Activated CD8-positive, alpha-beta memory T cell treated with anti-CD3 and anti-CD28 coated beads, Interleukin-2, amount 10 ng/mL, durations not matched to agents 7 days and 5 days (primary cell): ENCODE measurements at regions of chr5 and their contacts with region 1.

Region 1: GRCh38 chr5:172984243-172984953 is 827 bp downstream of the ATP6V0E1 start:
- DNase-seq: peak; percentile 88
- ATAC-seq: peak; percentile 73
- H3K4me3 Mint-ChIP-seq: peak overlapping the region; percentile 94
- H3K27ac Mint-ChIP-seq: peak overlapping the region; percentile 99
- H3K4me1 Mint-ChIP-seq: peaks cover 24% of the 10 kb centered on the region
- H3K27me3 Mint-ChIP-seq: no peaks in the 10 kb centered on the region

Region 2: GRCh38 chr5:172902497-172903200 is 81.7 kb before region 1 on chr5:
- CTCF ChIA-PET with region 1: no interaction called
- DNase-seq: no peak
- ATAC-seq: no peak
- H3K4me3 Mint-ChIP-seq: no peak overlapping the region
- H3K27ac Mint-ChIP-seq: no peak overlapping the region
- H3K4me1 Mint-ChIP-seq: peaks cover 12% of the 10 kb centered on the region
- H3K27me3 Mint-ChIP-seq: no peaks in the 10 kb centered on the region

Region 3: GRCh38 chr5:172958331-172959046 is 25.9 kb before region 1 on chr5:
- CTCF ChIA-PET with region 1: interaction called, 28 read pairs
- DNase-seq: peak; percentile 71
- ATAC-seq: peak; percentile 77
- H3K4me3 Mint-ChIP-seq: peak overlapping the region; percentile 92
- H3K27ac Mint-ChIP-seq: peak overlapping the region; percentile 95
- H3K4me1 Mint-ChIP-seq: peaks cover 22% of the 10 kb centered on the region
- H3K27me3 Mint-ChIP-seq: peaks cover 3% of the 10 kb centered on the region

Region 4: GRCh38 chr5:172994405-172994804 is 10.0 kb after region 1 on chr5:
- CTCF ChIA-PET with region 1: interaction called, 11 read pairs
- DNase-seq: no peak
- ATAC-seq: no peak
- H3K4me3 Mint-ChIP-seq: no peak overlapping the region
- H3K27ac Mint-ChIP-seq: no peak overlapping the region
- H3K4me1 Mint-ChIP-seq: peaks cover 24% of the 10 kb centered on the region
- H3K27me3 Mint-ChIP-seq: no peaks in the 10 kb centered on the region

Region 5: GRCh38 chr5:173035904-173036707 is 51.7 kb after region 1 on chr5:
- CTCF ChIA-PET with region 1: interaction called, 14 read pairs
- DNase-seq: no peak
- ATAC-seq: no peak
- H3K4me3 Mint-ChIP-seq: peak overlapping the region; percentile 63
- H3K27ac Mint-ChIP-seq: peak overlapping the region; percentile 88
- H3K4me1 Mint-ChIP-seq: peaks cover 44% of the 10 kb centered on the region
- H3K27me3 Mint-ChIP-seq: no peaks in the 10 kb centered on the region

Region 6: GRCh38 chr5:173057062-173057924 is 72.9 kb after region 1 on chr5:
- CTCF ChIA-PET with region 1: interaction called, 13 read pairs
- DNase-seq: peak; percentile 99
- ATAC-seq: peak; percentile 88
- H3K4me3 Mint-ChIP-seq: peak overlapping the region; percentile 86
- H3K27ac Mint-ChIP-seq: peak overlapping the region; percentile 92
- H3K4me1 Mint-ChIP-seq: peaks cover 41% of the 10 kb centered on the region
- H3K27me3 Mint-ChIP-seq: no peaks in the 10 kb centered on the region

Region 7: DNA sequence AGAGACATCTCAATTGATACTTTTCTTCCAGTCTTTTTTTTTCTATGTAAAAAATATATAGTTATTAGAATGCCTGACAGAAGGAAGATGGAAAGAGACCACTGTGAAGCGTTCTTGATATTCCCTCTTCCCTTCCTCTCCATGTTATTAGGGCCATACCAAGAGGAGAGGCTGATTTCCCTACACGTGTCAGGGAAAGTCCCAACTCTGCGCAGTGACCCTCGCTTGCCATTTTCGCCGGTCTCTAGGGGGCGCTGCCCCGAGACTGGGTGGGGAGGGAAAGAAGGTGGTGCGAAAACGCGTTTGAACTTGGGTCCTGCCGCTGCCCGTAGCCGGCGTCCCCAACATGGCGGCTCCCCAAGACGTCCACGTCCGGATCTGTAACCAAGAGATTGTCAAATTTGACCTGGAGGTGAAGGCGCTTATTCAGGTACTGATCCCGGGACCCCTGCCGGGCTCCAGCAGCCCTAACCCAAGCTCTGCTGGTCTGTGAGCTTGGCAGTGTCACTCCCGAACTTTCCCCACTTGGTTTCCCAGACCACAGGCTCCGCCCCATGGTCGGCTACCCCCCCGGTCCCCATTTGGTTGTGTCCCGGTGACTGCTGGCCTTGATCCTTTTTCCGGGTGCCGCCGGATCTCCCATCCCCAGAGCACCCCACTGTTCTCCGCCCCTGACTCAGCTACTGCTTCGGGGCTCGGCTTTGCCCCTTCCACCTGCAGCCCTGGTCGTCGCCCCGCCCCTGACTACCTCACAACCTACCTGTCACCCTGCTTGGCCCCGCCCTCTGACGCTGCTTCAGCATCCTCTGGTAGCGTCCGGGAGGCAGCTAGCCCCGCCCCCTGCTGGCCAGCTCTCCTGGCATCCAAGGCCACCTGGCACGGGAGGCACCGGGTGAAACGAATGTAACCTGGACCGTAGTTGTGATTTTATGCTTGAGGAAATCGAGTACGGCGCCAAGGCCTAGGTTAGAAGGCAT is 160.1 kb after region 1 on chr5 and contains the start of gene BNIP1:
- CTCF ChIA-PET with region 1: interaction called, 26 read pairs
- DNase-seq: peak; percentile 97
- ATAC-seq: peak; percentile 94
- H3K4me3 Mint-ChIP-seq: peak within 1 kb of the TSS; percentile 92
- H3K27ac Mint-ChIP-seq: peak within 1 kb of the TSS; percentile 98
- H3K4me1 Mint-ChIP-seq: peaks cover 18% of the 10 kb centered on the region
- H3K27me3 Mint-ChIP-seq: no peaks in the 10 kb centered on the region
- total RNA-seq, gene BNIP1: 14.5 to 16.3 TPM

Region 8: GRCh38 chr5:173451031-173451430 is 466.6 kb after region 1 on chr5:
- CTCF ChIA-PET with region 1: no interaction called
- DNase-seq: no peak
- ATAC-seq: peak; percentile 42
- H3K4me3 Mint-ChIP-seq: no peak overlapping the region
- H3K27ac Mint-ChIP-seq: no peak overlapping the region
- H3K4me1 Mint-ChIP-seq: no peaks in the 10 kb centered on the region
- H3K27me3 Mint-ChIP-seq: no peaks in the 10 kb centered on the region